H1 (cell line): ENCODE measurements at regions of chr12 and their contacts with region 1.

Region 1: GRCh38 chr12:45215419-45216229 is at the start of gene ANO6:
- DNase-seq: peak in 1 of 2 experiments; percentile 89
- H3K4me3 ChIP-seq: peak within 1 kb of the TSS; percentile 70 to 98 (median 84)
- H3K27ac ChIP-seq: peak within 1 kb of the TSS; percentile 86
- H3K4me1 ChIP-seq: peaks cover 0 to 15% (median 9%) of the 10 kb centered on the region in 4 experiments; a peak in 4 of 7 replicates
- H3K27me3 ChIP-seq: no peaks in the 10 kb centered on the region
- CTCF ChIP-seq: peak in 1 of 3 experiments; percentile 4; a peak in 1 of 4 replicates
- EP300 ChIP-seq: no peak
- POLR2A ChIP-seq: peak; percentile 74 to 80
- RAD21 ChIP-seq: 0 out of 4 replicates have a peak, but pooled peaks of 1 of the 2 experiments have one; percentile 7
- total RNA-seq, gene ANO6: 37.6 and 39.7 TPM in 2 replicates

Region 2: DNA sequence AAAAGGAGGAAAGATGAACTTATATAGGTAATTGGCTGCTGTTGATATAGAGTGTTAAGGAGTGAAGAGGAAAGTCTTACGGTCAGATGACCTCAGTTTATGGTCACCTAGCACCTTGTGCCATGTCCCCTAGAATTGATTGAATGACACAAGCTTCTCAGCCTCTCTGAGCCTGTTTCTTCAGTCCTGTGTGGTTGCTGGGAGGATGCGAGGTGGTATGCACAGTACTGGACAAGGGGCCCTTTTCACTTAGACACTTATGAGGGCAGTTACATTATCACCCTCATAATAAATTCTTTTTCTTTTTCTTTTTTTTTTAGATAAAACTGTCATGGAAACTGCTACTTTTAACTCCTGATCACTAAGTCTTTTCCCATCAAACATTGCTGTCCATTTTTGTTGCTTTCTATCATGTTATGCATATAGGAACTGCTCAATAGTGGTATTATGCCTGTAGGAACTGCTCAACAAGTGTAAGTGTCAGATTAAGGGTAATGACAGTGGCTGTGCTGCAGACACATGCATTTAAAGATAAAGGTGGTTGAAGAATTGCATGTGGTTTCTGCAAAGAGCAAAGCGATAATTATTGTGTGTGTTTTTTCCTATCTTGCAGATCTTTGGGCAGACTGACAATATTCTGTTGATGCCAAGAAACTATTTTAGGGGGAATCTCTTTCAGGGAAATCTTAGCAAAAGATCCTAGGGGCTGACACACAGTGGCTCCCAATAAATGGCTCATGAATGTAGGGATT is 11.9 kb after region 1 on chr12:
- CTCF ChIA-PET with region 1: interaction called, 6 read pairs
- POLR2A ChIA-PET with region 1: interaction called, 75 read pairs
- DNase-seq: no peak
- H3K4me3 ChIP-seq: no peak overlapping the region
- H3K27ac ChIP-seq: no peak overlapping the region
- H3K4me1 ChIP-seq: peaks cover 0 to 10% (median 7%) of the 10 kb centered on the region in 4 experiments; a peak in 6 of 7 replicates
- H3K27me3 ChIP-seq: no peaks in the 10 kb centered on the region
- CTCF ChIP-seq: no peak
- EP300 ChIP-seq: no peak
- POLR2A ChIP-seq: no peak
- RAD21 ChIP-seq: no peak

Region 3: DNA sequence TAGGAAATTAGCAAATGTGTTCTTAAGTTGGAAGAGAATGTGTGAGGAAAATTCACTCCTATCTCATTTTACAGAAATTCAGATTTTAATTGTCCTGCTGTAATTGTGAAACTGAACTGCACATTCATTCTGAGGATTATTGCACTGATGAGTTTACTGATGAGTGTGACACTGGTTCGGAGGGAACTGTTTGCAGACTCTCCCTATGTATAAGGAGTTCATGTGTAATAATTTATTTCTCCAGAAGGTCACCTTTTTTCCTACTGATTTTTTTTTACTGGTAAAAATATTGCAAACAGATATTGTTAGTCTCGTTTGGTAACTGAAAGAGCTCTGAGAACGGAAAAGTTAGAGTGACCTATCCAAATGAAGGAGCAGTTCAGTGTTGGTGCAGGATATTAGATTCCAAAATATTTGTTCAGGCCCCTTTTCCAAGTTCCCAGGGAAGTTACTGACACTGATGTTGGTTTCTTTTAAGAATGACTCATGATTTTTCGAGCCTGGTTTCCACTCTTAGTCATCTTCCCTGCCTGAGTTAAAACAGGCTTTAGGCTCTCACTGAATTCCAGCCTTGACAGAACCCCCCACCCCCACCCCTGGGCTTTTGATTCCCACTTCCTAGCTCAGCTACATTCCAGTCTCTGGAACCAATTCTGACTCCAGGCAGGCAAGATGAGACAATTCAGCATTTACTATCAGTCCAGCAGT is 18.7 kb after region 1 on chr12:
- CTCF ChIA-PET with region 1: interaction called, 6 read pairs
- POLR2A ChIA-PET with region 1: interaction called, 75 read pairs
- DNase-seq: no peak
- H3K4me3 ChIP-seq: peak overlapping the region in 1 of 4 experiments; percentile 34; a peak in 2 of 8 replicates
- H3K27ac ChIP-seq: peak overlapping the region; percentile 78; the same call in 1 of the 2 replicates
- H3K4me1 ChIP-seq: peaks cover 10 to 32% (median 24%) of the 10 kb centered on the region in 4 experiments
- H3K27me3 ChIP-seq: no peaks in the 10 kb centered on the region
- CTCF ChIP-seq: no peak
- EP300 ChIP-seq: peak in 1 of 2 experiments; percentile 54; a peak in 1 of 3 replicates
- POLR2A ChIP-seq: no peak; a peak in 1 of 3 replicates
- RAD21 ChIP-seq: no peak; a peak in 1 of 4 replicates